Heart right ventricle (tissue), 16 donors: ENCODE measurements at regions of chr3 and their contacts with region 1.

Region 1: DNA sequence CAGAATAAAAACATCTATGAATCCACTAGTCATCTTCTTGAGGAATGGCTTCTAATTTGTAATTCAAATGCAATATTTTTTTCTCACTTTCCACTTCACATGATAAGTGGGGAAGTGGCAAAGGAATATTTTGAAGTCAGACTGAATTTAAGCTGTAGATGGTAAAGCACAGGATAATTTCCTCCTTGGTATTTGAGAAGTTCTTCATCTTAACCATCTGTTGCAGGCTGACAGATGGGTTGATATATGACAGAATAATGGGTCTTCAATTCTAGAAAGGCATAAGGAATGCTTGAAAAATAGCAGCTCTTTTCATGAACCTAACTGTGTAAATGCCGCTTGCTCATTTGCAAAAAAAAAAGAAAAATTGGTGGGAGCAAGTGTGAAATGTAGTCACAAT is 66.5 kb upstream of the SNTN start:
- DNase-seq: no peak
- ATAC-seq: no peak
- H3K4me3 ChIP-seq: no peak overlapping the region
- H3K27ac ChIP-seq: no peak overlapping the region
- H3K4me1 ChIP-seq: no peaks in the 10 kb centered on the region
- H3K27me3 ChIP-seq: no peaks in the 10 kb centered on the region
- CTCF ChIP-seq: no peak

Region 2: GRCh38 chr3:63497641-63498040 is 88.3 kb before region 1 on chr3:
- intact Hi-C with region 1: no loop called
- DNase-seq: no peak
- ATAC-seq: no peak
- H3K4me3 ChIP-seq: no peak overlapping the region
- H3K27ac ChIP-seq: no peak overlapping the region
- H3K4me1 ChIP-seq: no peaks in the 10 kb centered on the region
- H3K27me3 ChIP-seq: no peaks in the 10 kb centered on the region
- CTCF ChIP-seq: no peak

Region 3: DNA sequence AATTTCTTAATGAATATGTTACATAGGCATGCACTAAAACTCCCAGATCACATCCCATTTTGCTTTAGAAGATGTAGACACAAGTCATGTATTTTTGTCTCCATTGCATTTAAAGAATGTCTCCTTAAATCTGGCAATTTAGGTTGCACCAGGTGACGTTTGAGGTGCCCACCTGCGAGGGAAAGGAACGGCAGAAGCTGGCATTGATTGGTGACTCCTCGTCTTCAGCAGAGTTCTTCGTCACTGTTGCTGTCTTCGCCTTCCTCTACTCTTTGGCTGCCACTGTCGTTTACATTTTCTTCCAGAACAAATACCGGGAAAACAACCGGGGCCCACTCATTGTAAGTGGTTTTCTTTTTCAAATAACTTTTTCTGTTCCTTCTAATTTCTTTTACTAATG is 29.5 kb before region 1 on chr3:
- intact Hi-C with region 1: loop called in 1 of 10 experiments (anchors 2 kb)
- DNase-seq: no peak
- ATAC-seq: no peak
- H3K4me3 ChIP-seq: no peak overlapping the region
- H3K27ac ChIP-seq: no peak overlapping the region
- H3K4me1 ChIP-seq: no peaks in the 10 kb centered on the region
- H3K27me3 ChIP-seq: no peaks in the 10 kb centered on the region
- CTCF ChIP-seq: no peak

Region 4: DNA sequence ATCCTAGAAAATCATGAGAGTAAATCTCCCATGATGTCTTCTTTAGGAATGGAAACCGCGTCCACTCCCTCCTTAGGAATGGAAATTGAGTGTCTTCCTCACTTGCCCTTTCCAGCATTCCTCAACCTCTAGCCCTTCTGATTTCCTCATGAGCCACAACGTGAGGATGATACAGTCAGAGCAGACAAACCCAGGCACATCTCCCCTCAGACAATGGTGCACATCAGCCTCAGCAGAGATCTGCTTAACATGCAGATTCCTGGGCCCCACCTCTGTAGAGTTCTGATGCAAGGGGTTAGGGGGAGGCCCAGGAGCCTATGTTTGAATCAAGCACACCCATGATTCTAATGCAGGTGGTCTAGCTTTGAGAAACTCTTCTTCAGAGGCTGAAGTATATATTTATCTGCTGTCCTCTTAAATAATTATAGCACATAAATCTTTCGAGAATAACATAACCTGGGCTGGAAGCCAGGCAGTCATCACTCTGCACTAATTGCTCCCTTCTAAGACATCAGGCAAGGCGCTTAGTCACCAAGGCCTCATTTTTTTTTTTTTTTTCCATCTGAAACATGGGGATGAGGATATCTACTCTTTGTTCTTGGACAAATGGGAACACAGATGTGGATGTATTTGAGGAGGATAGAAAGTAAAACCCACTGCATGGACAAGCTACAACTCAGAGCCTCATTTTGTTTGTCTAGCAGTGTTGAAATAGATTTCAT is 557.6 kb after region 1 on chr3:
- intact Hi-C with region 1: no loop called
- DNase-seq: no peak
- ATAC-seq: peak in 5 of 8 donors; percentile 28 to 62 (median 38)
- H3K4me3 ChIP-seq: no peak overlapping the region
- H3K27ac ChIP-seq: peak overlapping the region in 2 of 10 donors; percentile 8 to 33
- H3K4me1 ChIP-seq: peaks cover 0 to 27% (median 15%) of the 10 kb centered on the region in 9 donors
- H3K27me3 ChIP-seq: no peaks in the 10 kb centered on the region
- CTCF ChIP-seq: no peak